Posterior vena cava (tissue), 2 donors: ENCODE measurements at regions of chr3 and their contacts with region 1.

Region 1: DNA sequence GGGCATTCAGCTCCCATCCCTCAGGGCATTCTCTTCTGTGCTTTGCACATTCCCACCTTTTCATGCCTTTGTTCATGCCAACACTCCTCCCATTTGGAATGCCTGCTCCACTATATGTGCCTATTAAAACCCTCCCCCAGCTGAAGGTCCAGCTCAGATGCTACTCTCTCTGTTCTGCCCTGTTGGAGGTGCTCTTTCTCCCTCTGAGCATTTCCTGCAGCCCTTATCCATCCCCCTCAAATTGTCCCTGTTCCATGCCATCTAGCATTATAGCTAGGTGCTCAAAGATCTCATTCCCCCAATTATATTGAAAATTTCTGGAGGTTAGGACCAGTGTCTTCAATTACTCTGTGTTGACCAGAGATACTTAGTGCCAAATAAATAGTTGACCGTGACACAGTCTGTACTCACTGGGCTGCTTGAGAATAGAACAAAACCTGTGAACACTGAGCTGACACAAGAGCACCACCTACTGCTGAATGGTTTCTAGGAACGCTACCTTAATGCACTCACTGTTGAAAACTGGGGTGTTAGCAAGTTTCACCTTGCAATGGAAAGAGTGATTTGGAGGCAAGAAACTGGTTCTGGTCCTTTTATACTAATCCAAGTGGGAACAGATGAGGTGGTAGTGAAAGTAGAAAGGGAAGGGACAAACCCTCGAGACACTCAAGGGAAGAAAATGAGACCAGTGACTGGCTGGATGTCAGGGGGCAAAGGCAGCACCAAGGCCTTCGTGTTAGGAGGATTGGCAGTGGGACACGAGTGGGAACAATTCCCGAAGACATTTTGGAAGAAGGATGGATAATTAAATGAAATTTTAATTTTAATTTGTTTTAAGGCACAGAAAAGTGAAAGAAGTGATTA is 289.8 kb upstream of the ROPN1 start:
- DNase-seq: no peak

Region 2: GRCh38 chr3:124014366-124014942 is 267.2 kb before region 1 on chr3:
- intact Hi-C with region 1: loop called in 1 of 2 experiments (anchors 5 kb)
- DNase-seq: no peak

Region 3: GRCh38 chr3:124084022-124084881 is 197.4 kb before region 1 on chr3:
- intact Hi-C with region 1: loop called in 1 of 2 experiments (anchors 10 kb)
- DNase-seq: no peak

Region 4: DNA sequence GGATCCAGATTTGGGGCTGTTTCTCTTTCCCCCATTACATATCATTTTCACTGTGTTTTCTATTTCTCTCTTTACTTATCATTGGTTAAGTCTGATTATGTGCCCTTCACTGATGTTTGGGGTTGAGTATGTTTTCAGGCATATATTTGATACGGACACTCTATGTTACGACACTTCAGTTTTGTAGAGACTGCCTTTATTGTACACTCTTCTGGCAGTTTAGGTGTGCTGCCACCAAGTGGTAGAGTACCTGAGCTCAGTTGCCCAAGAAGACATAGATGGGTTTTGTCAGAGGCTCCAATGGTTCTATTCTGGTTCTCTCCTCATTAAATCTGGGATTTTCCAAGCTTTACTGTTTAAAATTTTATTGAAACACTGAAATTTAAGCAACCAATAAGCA is 34.7 kb before region 1 on chr3:
- intact Hi-C with region 1: loop called in 1 of 2 experiments (anchors 5 kb)
- DNase-seq: no peak

Region 5: GRCh38 chr3:124318014-124318413 is 36.3 kb after region 1 on chr3:
- intact Hi-C with region 1: no loop called
- DNase-seq: no peak